ENCODE measurements at regions of chr7 and their contacts with region 1.

Region 1: DNA sequence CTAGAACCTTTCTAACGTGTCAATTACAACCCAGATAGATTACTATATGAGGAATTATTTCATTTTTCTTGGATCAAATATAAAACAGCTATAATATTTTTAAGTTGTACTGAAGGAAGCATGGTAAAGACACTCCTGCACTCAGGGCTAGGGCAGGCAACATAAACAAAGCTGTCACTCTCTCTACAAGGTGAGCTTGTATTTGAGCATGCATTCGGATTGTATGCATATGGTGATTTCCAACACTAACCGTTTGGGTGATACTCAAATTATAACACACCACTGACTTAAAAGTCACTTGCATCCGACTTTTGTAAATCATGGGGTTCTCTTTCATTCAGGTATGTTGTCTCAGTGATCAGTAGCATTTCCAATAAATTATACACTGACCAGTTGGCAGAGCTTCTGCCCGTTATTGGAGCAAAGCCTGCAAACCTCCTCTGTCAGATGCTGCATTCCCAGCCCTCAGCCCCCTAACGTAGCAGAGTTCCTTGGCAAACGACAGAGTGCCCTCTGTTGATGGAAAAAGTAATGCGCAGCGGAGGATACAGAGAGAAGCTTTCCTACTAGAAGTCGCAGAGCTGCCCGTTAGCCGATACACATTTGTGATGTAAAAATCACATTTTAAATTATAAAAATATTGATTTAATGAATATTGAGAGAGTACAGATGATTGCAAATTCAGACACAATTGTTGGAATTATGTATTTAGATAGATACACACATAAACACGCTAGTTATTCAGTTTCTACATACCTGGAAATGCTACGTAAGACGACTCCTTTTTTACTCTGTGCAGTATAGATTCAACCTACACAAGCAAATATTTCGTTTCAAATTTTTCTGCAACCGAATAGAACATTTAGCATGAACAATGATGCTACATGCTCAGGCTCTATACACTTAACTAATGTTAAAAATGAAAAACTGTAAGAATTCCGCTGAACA is 173.9 kb upstream of the SP4 start:
- DNase-seq: peak; percentile 38 to 81
- H3K4me3 ChIP-seq: peak overlapping the region in 1 of 4 experiments; percentile 51; a peak in 2 of 8 replicates
- H3K27ac ChIP-seq: no peak overlapping the region
- H3K4me1 ChIP-seq: peaks cover 0 to 9% (median 4%) of the 10 kb centered on the region in 4 experiments; a peak in 4 of 7 replicates
- H3K27me3 ChIP-seq: no peaks in the 10 kb centered on the region
- CTCF ChIP-seq: peak; percentile 61 to 88 (median 86)
- EP300 ChIP-seq: no peak
- POLR2A ChIP-seq: no peak
- RAD21 ChIP-seq: peak; percentile 96 to 97

Region 2: GRCh38 chr7:20778063-20778721 is 475.8 kb before region 1 on chr7:
- CTCF ChIA-PET with region 1: interaction called, 31 read pairs
- POLR2A ChIA-PET with region 1: no interaction called
- DNase-seq: peak in 1 of 2 experiments; percentile 91
- H3K4me3 ChIP-seq: peak overlapping the region; percentile 27 to 62 (median 58)
- H3K27ac ChIP-seq: peak overlapping the region; percentile 11; the same call in 1 of the 2 replicates
- H3K4me1 ChIP-seq: peaks cover 11 to 29% (median 17%) of the 10 kb centered on the region in 4 experiments
- H3K27me3 ChIP-seq: peaks cover 4 to 13% (median 12%) of the 10 kb centered on the region in 4 experiments
- CTCF ChIP-seq: peak; percentile 78 to 87 (median 85)
- EP300 ChIP-seq: no peak
- POLR2A ChIP-seq: 0 out of 3 replicates have a peak, but pooled peaks of 1 of the 2 experiments have one; percentile 24
- RAD21 ChIP-seq: peak; percentile 87 to 90

Region 3: GRCh38 chr7:21023841-21024476 is 230.1 kb before region 1 on chr7:
- CTCF ChIA-PET with region 1: interaction called, 12 read pairs
- POLR2A ChIA-PET with region 1: no interaction called
- DNase-seq: no peak
- H3K4me3 ChIP-seq: no peak overlapping the region
- H3K27ac ChIP-seq: no peak overlapping the region
- H3K4me1 ChIP-seq: peaks cover 4 to 19% (median 16%) of the 10 kb centered on the region in 4 experiments
- H3K27me3 ChIP-seq: no peaks in the 10 kb centered on the region
- CTCF ChIP-seq: peak in 1 of 3 experiments; percentile 11; a peak in 1 of 4 replicates
- EP300 ChIP-seq: no peak
- POLR2A ChIP-seq: no peak
- RAD21 ChIP-seq: peak; percentile 26 to 36; a peak in 3 of 4 replicates

Region 4: DNA sequence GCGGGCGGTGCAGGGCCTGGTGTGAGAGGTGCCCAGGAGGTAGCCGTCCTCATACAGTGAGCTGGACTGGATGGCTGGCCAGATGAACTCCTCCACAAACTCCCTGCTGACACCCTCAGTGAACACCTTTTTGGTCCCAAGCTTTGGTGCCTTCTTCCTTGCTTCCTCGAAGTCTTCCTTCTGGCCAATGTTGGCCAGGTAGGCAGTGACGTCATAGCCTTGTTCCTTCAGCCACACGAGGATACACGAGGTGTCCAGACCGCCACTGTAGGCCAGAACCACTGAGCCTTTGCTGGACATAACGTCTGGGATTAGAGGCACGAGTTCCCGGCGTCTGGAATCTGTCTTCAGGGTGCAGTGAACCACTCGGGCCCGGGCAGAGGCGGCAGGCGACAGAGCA is 32.9 kb before region 1 on chr7:
- CTCF ChIA-PET with region 1: no interaction called
- POLR2A ChIA-PET with region 1: no interaction called
- DNase-seq: no peak
- H3K4me3 ChIP-seq: no peak overlapping the region
- H3K27ac ChIP-seq: no peak overlapping the region
- H3K4me1 ChIP-seq: no peaks in the 10 kb centered on the region
- H3K27me3 ChIP-seq: no peaks in the 10 kb centered on the region
- CTCF ChIP-seq: no peak
- EP300 ChIP-seq: no peak
- POLR2A ChIP-seq: no peak
- RAD21 ChIP-seq: no peak

Region 5: GRCh38 chr7:21238400-21239116 is 15.5 kb before region 1 on chr7:
- CTCF ChIA-PET with region 1: interaction called, 23 read pairs
- POLR2A ChIA-PET with region 1: interaction called, 3 read pairs
- DNase-seq: no peak
- H3K4me3 ChIP-seq: no peak overlapping the region
- H3K27ac ChIP-seq: no peak overlapping the region
- H3K4me1 ChIP-seq: no peaks in the 10 kb centered on the region; a peak in 1 of 7 replicates
- H3K27me3 ChIP-seq: no peaks in the 10 kb centered on the region
- CTCF ChIP-seq: no peak
- EP300 ChIP-seq: no peak
- POLR2A ChIP-seq: no peak
- RAD21 ChIP-seq: no peak

Region 6: GRCh38 chr7:21293771-21294170 is 39.8 kb after region 1 on chr7:
- CTCF ChIA-PET with region 1: no interaction called
- POLR2A ChIA-PET with region 1: no interaction called
- DNase-seq: no peak
- H3K4me3 ChIP-seq: no peak overlapping the region
- H3K27ac ChIP-seq: no peak overlapping the region
- H3K4me1 ChIP-seq: no peaks in the 10 kb centered on the region
- H3K27me3 ChIP-seq: no peaks in the 10 kb centered on the region
- CTCF ChIP-seq: peak in 2 of 3 experiments; percentile 2 to 11; a peak in 3 of 4 replicates
- EP300 ChIP-seq: no peak
- POLR2A ChIP-seq: no peak
- RAD21 ChIP-seq: peak; percentile 43 to 60

Region 7: DNA sequence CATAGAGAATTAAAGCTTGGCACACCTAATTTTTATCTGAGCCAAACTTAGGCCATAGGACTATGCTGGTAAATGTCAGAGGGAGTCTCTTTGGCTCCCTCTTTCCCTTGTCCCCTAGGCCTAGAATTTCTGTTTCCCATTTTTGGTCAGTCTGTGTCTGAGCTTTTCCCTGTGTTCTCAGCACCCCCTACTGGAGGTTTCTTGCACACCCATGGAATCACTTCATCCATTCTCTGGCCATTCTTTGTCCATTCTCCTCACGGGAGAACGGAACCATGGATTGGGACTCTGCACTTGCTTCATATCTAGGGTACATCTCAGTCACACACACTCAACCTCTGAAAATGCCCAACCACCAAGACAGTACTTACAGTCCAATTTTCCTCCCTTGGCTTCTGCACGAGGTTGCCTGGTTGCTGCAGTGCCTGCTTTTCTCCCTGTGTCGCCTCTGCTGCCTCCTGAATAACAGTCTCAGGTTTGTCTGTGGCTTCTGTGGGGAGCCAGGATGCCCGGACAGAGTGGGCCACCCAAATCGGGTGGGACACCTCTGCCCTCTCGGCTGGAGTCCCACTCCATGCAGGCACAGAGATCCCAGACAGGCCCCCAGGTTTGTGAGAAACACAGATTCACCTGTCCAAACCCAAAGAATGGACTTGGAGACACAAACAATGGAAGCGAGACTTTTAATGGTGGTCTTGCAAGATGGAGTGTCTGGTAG is 253.8 kb after region 1 on chr7:
- CTCF ChIA-PET with region 1: interaction called, 13 read pairs
- POLR2A ChIA-PET with region 1: no interaction called
- DNase-seq: peak; percentile 10 to 78
- H3K4me3 ChIP-seq: no peak overlapping the region
- H3K27ac ChIP-seq: no peak overlapping the region
- H3K4me1 ChIP-seq: peaks cover 0 to 3% (median 0%) of the 10 kb centered on the region in 4 experiments; a peak in 1 of 7 replicates
- H3K27me3 ChIP-seq: no peaks in the 10 kb centered on the region
- CTCF ChIP-seq: peak; percentile 38 to 84 (median 77)
- EP300 ChIP-seq: no peak
- POLR2A ChIP-seq: no peak
- RAD21 ChIP-seq: peak; percentile 91 to 92

Measured in H1 (cell line).